SK-N-SH (cell line): ENCODE measurements at regions of chr2 and their contacts with region 1.

Region 1: DNA sequence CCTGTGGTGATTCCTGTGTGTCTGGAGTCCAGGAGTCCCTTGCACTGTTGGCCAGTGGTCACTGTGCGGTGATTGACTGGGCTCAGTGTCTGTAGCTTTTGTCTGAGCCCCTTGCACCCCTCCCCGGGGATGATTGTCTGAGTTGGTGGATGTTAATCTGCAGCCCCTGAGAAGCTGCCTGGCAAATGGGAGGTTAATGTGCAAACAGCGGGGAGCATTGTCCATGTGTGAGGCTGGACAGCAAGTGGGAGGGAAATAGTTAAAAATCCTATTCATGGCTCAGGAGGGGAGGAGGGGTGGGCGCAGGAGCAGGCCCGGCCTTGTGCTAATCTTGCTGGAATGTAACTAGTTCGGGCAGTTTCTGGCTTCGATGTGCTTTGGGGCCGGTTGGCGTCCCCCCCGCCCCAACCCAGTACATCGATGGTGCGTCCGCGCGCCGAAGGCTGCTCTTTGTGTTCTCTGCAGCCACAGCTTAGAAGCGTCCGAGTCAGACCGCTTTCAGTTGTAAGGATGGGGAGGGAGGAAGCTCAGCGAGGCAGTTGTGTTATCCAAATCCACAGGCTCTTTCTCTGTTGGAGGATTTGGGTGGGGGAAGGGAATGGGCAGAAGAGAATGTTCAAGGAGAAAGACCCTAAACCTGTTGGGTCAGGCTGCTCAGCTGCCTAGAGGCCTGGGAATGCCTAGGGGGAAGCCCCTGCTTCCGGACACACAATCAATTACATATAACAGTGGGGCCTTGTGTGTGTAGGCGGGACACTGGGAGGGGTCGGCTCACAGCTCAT is 71.8 kb downstream of the TGOLN2 start:
- DNase-seq: peak; percentile 50
- H3K4me3 ChIP-seq: no peak overlapping the region
- H3K27ac ChIP-seq: peak overlapping the region; percentile 29 to 95; a peak in 3 of 4 replicates
- H3K4me1 ChIP-seq: peaks cover 33 to 62% of the 10 kb centered on the region in 2 experiments
- H3K27me3 ChIP-seq: no peaks in the 10 kb centered on the region
- CTCF ChIP-seq: no peak
- EP300 ChIP-seq: no peak
- RAD21 ChIP-seq: no peak

Region 2: GRCh38 chr2:85243101-85244072 is 12.6 kb before region 1 on chr2:
- CTCF ChIA-PET with region 1: interaction called, 33 read pairs
- POLR2A ChIA-PET with region 1: interaction called, 4 read pairs
- DNase-seq: peak; percentile 66
- H3K4me3 ChIP-seq: no peak overlapping the region
- H3K27ac ChIP-seq: no peak overlapping the region
- H3K4me1 ChIP-seq: peaks cover 23 to 26% of the 10 kb centered on the region in 2 experiments
- H3K27me3 ChIP-seq: no peaks in the 10 kb centered on the region
- CTCF ChIP-seq: peak; percentile 52
- EP300 ChIP-seq: no peak
- RAD21 ChIP-seq: peak; percentile 64

Region 3: DNA sequence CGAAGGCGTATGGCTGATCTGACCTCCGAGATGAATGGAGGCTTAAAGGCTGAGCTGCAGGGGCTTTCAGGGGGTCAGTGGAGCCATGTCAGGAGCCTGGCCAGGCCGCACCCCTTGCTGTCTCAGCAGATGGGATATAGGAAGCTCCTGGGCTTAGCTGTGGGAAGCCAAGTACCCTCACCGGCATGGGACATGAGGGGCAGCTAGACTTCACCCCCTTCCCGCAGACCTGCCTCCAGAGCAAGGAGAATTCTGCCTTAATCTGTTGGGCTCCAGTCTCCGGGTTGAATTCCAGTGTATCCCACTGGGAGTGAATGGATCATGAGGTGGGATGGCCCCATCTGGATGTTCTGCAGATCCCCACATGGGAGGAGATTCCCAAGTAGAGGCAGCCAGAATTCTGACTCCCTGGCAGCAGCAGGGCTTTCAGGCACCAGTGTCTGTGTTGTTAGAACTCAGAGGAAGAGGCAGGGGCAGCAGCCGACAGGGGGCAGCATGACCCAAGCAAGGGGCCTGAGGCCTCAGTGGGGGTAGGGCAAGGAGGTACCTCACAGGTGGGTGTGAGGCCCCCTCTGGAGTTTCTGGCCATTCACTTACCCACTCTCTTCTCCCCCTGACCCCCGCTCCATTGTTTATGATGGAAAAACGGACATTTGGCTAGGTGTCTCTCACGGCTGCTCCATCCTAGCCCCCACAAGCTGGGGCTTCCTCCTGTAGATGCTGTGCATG is 135.1 kb after region 1 on chr2:
- CTCF ChIA-PET with region 1: no interaction called
- POLR2A ChIA-PET with region 1: no interaction called
- DNase-seq: peak; percentile 60
- H3K4me3 ChIP-seq: no peak overlapping the region
- H3K27ac ChIP-seq: no peak overlapping the region
- H3K4me1 ChIP-seq: peaks cover 0 to 13% of the 10 kb centered on the region in 2 experiments; a peak in 1 of 4 replicates
- H3K27me3 ChIP-seq: no peaks in the 10 kb centered on the region
- CTCF ChIP-seq: peak; percentile 53
- EP300 ChIP-seq: no peak
- RAD21 ChIP-seq: peak; percentile 73

Region 4: GRCh38 chr2:85924522-85924921 is 668.5 kb after region 1 on chr2:
- CTCF ChIA-PET with region 1: no interaction called
- POLR2A ChIA-PET with region 1: no interaction called
- DNase-seq: no peak
- H3K4me3 ChIP-seq: no peak overlapping the region
- H3K27ac ChIP-seq: no peak overlapping the region
- H3K4me1 ChIP-seq: no peaks in the 10 kb centered on the region
- H3K27me3 ChIP-seq: no peaks in the 10 kb centered on the region
- CTCF ChIP-seq: no peak
- EP300 ChIP-seq: no peak
- RAD21 ChIP-seq: no peak